ENCODE measurements at regions of chr4 and their contacts with region 1.

Region 1: GRCh38 chr4:163544407-163545038 is 50.0 kb downstream of the TMA16 start:
- DNase-seq: peak; percentile 69 to 85 (median 85)
- H3K4me3 ChIP-seq: peak overlapping the region in 4 of 7 experiments; percentile 30 to 78 (median 52)
- H3K27ac ChIP-seq: no peak overlapping the region
- H3K4me1 ChIP-seq: peaks cover 0 to 8% (median 3%) of the 10 kb centered on the region in 4 experiments
- H3K27me3 ChIP-seq: no peaks in the 10 kb centered on the region

Region 2: DNA sequence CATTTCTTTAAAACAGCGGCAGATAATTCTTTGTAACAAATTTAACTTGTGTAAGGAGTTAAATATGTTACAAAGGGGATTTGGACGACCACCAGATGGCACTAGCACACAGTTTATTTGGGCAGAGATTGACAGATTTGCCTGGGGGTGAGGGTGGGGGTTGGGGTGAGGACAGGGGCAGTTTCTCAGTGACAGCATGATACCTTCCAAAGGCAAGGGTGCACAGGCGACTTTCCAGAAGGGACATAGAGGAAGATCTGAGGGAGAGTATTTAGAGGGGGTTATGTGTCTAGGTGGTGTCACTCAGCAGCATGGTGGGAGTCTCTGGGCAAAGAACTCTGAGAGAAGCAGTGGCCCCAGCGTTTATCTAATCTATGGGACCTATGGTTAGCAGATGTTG is 59.6 kb before region 1 on chr4:
- CTCF ChIA-PET with region 1: interaction called, 117 read pairs
- POLR2A ChIA-PET with region 1: no interaction called
- DNase-seq: peak; percentile 77 to 88 (median 81)
- H3K4me3 ChIP-seq: no peak overlapping the region
- H3K27ac ChIP-seq: no peak overlapping the region
- H3K4me1 ChIP-seq: peaks cover 0 to 7% (median 0%) of the 10 kb centered on the region in 4 experiments
- H3K27me3 ChIP-seq: no peaks in the 10 kb centered on the region

Region 3: DNA sequence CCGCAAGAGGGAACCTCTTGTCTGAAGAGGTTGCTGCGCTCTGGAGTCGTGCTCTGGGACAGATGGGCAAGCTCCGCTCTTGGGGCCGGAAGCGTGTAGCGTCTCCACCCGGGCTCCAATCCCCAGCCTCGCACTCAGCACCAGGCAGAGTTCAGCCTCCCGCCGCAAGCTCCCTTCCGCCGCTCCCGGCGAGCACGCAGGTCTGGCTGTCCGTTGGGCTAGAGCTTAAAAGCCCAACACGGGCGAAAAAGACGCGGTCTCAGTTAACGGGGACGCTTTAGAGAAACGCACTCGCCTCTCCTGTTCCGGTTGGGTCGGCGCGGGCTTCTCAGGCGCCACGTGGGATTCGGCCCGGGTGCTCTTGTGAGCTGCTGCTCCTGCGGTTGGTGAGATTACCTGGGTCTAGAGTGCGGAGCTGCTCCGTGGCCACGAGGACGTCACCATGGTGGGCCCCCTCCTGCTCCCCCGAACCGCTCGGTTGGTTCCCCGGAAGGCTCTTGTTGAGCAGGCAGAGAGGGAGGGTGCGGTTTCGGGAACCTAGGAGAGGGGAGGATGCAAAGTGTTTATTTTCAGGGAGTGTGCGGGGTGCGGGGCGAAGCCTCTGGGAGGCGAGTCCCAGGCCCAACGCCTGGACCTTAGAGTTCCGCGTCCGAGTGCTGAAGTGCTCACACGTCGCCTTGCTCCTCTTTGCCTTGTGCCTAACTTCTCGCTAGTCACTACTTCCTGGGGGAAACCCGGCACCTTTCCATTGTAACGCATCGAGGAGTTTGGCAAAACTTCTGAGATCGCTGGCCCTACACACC is 50.0 kb before region 1 on chr4 and contains the start of gene TMA16:
- CTCF ChIA-PET with region 1: interaction called, 14 read pairs
- POLR2A ChIA-PET with region 1: no interaction called
- DNase-seq: peak; percentile 94 to 97 (median 96)
- H3K4me3 ChIP-seq: peak within 1 kb of the TSS; percentile 93 to 99 (median 97)
- H3K27ac ChIP-seq: peak within 1 kb of the TSS; percentile 85 to 94
- H3K4me1 ChIP-seq: peaks cover 7 to 24% (median 14%) of the 10 kb centered on the region in 4 experiments
- H3K27me3 ChIP-seq: no peaks in the 10 kb centered on the region

Region 4: GRCh38 chr4:163663454-163664225 is 119.1 kb after region 1 on chr4:
- CTCF ChIA-PET with region 1: interaction called, 14 read pairs
- POLR2A ChIA-PET with region 1: no interaction called
- DNase-seq: peak in 1 of 3 donors; percentile 9
- H3K4me3 ChIP-seq: no peak overlapping the region
- H3K27ac ChIP-seq: no peak overlapping the region
- H3K4me1 ChIP-seq: peaks cover 9 to 37% (median 25%) of the 10 kb centered on the region in 4 experiments
- H3K27me3 ChIP-seq: no peaks in the 10 kb centered on the region

Region 5: DNA sequence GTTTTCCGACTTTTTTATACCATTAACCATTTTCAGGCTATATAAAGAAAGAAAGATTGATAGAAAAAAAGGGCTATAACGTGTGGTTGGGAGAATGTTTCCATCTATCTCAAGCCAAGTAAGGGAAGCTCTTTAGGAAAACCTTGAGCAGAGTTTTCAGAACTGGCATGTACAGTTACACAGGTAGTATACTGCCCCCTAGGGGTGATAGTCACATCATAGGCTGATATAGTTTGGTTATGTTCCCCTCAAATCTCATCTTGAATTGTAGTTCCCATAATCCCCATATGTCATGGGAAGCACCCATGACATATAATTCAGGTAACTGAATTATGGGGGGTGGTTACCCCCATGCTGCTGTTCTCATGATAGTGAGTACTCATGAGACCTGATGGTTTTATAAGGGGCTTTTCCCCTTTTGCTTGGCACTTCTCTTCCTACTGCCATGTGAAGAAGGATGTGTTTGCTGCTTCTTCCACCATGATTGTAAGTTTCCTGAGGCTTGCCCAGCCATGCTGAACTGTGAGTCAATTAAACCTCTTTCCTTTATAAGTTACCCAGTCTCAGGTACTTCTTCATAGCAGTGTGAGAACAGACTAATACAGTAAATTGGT is 136.8 kb after region 1 on chr4:
- CTCF ChIA-PET with region 1: interaction called, 173 read pairs
- POLR2A ChIA-PET with region 1: no interaction called
- DNase-seq: peak; percentile 72 to 81 (median 75)
- H3K4me3 ChIP-seq: no peak overlapping the region
- H3K27ac ChIP-seq: no peak overlapping the region
- H3K4me1 ChIP-seq: no peaks in the 10 kb centered on the region
- H3K27me3 ChIP-seq: no peaks in the 10 kb centered on the region

Region 6: DNA sequence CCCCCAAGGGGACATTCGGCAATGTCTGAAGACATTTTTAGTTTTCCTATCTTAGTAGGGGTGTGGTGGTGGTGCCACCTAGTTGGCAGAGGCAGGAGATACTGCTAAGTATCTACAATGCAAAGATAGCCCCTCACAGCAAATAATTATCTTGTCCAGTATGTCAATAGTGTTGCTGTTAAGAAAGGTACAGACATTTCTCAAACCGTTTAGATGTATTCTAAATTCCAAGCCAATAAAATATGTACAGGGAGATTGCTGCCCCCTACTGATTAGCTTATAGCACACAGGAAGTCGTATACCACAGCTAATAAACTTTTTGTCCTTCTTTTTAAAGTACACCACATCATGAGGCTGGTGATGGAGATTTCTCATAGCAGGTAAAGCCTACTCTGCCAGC is 210.5 kb after region 1 on chr4:
- CTCF ChIA-PET with region 1: interaction called, 69 read pairs
- POLR2A ChIA-PET with region 1: no interaction called
- DNase-seq: peak; percentile 15 to 55 (median 33)
- H3K4me3 ChIP-seq: no peak overlapping the region
- H3K27ac ChIP-seq: no peak overlapping the region
- H3K4me1 ChIP-seq: no peaks in the 10 kb centered on the region
- H3K27me3 ChIP-seq: no peaks in the 10 kb centered on the region

Region 7: DNA sequence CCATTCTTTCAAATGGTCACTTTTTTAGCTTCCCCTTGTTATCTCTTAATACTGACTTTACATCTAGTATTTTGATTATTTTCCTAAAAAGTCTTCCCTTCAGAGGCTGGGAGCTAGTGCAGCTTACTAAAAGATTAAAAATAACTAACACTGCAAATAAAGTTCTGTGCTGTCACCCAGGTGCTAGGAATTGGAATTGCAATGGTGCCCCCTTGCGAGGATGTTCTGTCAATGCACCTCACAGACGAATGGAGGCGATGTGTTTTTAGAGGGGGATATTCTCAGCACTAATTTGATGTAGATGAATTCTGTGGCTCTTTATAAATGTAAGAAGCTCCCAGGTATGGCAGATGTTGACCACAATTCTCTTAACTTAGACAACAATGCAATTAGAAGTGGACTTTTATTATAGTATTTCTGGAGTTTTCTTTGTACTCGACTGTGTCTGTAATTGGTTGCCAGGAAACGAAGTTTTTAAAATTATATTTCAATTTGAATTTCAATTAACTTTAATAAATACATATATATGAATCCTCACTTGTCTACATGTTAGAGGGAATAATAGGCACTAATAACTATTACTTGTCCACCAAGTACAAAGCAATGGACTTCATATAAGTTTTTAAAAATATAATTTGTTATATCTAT is 1187.4 kb after region 1 on chr4:
- CTCF ChIA-PET with region 1: interaction called, 24 read pairs
- POLR2A ChIA-PET with region 1: no interaction called
- DNase-seq: peak; percentile 13 to 71 (median 53)
- H3K4me3 ChIP-seq: no peak overlapping the region
- H3K27ac ChIP-seq: no peak overlapping the region
- H3K4me1 ChIP-seq: no peaks in the 10 kb centered on the region
- H3K27me3 ChIP-seq: peaks cover 0 to 3% (median 0%) of the 10 kb centered on the region in 5 experiments

Measured in common myeloid progenitor, CD34-positive (primary cell).